ENCODE measurements at regions of chr1 and their contacts with region 1.

Region 1: GRCh38 chr1:67429528-67430351 is 462 bp downstream of the SERBP1 start:
- DNase-seq: no peak
- H3K4me3 ChIP-seq: peak overlapping the region; percentile 89
- CTCF ChIP-seq: no peak

Region 2: DNA sequence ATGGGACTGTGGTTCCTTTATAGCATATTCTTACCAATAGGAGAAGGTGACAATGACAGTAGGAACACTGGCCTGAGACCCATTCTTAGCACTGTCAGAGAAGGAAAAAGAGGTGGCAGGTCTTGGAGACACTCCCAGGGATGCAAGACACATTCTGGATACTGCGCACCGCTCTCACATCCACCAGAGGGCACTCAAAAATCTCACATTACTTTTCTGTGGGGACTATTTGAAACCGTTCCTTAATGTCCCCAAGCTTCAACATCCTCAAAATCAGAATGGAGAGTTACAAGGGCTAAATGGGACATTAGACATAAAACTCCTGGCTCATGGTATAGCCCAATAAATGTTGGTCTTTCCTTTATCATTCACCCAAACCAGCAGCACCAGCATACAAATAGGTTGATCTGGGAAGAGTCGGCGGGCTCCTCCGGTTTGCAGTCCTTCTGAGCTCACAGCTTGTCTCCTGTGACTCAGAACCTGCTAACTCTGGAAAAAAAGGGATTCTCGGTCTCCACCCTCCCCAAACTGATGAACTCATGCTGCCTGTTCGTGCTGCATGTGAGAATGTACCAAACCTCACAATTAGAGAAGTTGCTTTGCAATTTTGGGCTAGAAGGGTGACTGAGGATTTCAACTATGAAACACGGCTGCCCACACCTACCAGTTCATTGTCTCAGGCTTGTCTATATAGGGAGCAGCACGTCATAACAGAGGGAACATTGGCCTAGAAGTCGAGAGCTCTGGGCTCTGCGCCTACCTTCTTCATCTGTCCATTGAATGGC is 81.9 kb before region 1 on chr1:
- in situ Hi-C with region 1: loop called (anchors 5 kb)
- DNase-seq: peak; percentile 56
- H3K4me3 ChIP-seq: peak overlapping the region; percentile 10
- CTCF ChIP-seq: peak; percentile 86

Region 3: GRCh38 chr1:67372136-67372535 is 57.6 kb before region 1 on chr1:
- in situ Hi-C with region 1: loop called (anchors 5 kb)
- DNase-seq: no peak
- H3K4me3 ChIP-seq: no peak overlapping the region
- CTCF ChIP-seq: no peak

Region 4: GRCh38 chr1:67500413-67500959 is 70.7 kb after region 1 on chr1:
- in situ Hi-C with region 1: loop called (anchors 5 kb)
- DNase-seq: peak; percentile 66
- H3K4me3 ChIP-seq: no peak overlapping the region
- CTCF ChIP-seq: peak; percentile 98

Measured in astrocyte of the cerebellum (primary cell).